MCF 10A (cell line): ENCODE measurements at regions of chr4 and their contacts with region 1.

Region 1: DNA sequence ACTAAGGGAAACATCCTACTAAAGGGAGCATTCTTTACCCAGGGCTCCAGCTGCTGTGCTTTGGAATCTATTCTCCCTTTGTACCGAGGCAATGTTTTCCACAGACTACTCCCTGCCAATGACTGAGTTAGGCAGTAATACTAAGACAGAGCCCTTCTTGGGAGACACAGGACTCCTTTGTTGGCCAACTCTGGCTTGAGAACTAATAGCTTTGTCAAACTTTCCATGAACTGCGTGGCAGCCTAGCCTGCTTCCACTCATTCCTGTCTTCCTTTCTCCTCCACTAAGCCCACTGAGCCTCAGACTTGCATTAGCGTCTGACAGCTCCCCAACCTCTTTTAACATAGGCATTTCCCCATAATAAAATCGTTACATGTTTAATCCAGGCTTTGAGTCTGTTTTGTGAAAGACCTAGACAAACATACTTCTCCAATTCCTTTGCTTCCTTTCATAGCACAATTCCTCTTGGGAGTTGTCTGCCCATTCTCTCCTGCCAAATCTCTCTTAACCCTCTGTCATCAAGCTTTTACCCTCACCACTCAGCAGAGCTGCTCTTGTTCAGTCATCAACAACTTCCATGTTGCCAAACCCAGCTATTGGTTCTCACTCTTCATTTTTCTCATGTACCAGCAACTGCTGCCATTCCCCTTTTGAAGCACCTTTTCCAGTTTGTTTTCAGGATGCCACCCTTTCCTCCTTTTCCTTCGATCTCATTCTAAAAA is 300.3 kb upstream of the IGFBP7 start:
- DNase-seq: no peak
- H3K4me3 Mint-ChIP-seq: no peak overlapping the region
- H3K27ac Mint-ChIP-seq: no peak overlapping the region
- H3K4me1 Mint-ChIP-seq: peaks cover 2% of the 10 kb centered on the region
- H3K27me3 Mint-ChIP-seq: no peaks in the 10 kb centered on the region
- CTCF ChIP-seq: no peak

Region 2: DNA sequence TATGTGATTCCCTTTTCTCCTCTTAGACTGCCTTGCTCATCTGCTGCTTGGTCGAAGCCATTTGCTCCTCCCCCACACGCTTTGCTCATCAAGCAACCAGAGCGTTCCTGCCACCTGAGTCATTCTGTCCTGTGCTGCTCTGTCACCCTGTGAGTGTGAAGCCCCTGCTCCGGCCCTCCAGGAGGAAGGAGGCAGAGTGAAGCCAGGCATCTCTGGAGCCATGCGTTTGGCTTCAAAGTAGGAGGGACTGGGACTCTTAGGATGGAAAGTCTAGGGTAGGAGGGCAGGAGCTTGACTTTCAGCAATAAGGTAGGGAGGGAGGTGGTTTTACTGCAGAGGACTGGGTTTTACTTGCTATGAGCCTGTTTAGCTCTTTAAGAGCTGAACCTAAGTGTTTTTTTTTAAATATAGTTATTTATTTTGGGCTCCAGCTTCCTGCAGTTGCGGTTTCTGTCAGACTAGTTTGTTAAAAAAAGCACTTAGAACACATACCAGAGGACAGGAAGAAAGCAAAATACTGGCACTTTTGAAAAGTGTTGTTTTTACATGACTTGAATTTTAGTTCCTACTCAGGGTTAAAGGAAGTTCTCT is 652.6 kb before region 1 on chr4:
- CTCF ChIA-PET with region 1: no interaction called
- POLR2A ChIA-PET with region 1: no interaction called
- intact Hi-C with region 1: no loop called
- DNase-seq: peak; percentile 87
- H3K4me3 Mint-ChIP-seq: peak overlapping the region; percentile 34
- H3K27ac Mint-ChIP-seq: peak overlapping the region; percentile 88
- H3K4me1 Mint-ChIP-seq: peaks cover 30% of the 10 kb centered on the region
- H3K27me3 Mint-ChIP-seq: no peaks in the 10 kb centered on the region
- CTCF ChIP-seq: no peak

Region 3: GRCh38 chr4:57426779-57427395 is 16.4 kb after region 1 on chr4:
- CTCF ChIA-PET with region 1: interaction called, 12 read pairs
- POLR2A ChIA-PET with region 1: interaction called, 4 read pairs
- intact Hi-C with region 1: no loop called
- DNase-seq: peak; percentile 78
- H3K4me3 Mint-ChIP-seq: no peak overlapping the region
- H3K27ac Mint-ChIP-seq: no peak overlapping the region
- H3K4me1 Mint-ChIP-seq: peaks cover 20% of the 10 kb centered on the region
- H3K27me3 Mint-ChIP-seq: no peaks in the 10 kb centered on the region
- CTCF ChIP-seq: peak; percentile 61